GM18951 (cell line): ENCODE measurements at regions of chr1 and their contacts with region 1.

Region 1: DNA sequence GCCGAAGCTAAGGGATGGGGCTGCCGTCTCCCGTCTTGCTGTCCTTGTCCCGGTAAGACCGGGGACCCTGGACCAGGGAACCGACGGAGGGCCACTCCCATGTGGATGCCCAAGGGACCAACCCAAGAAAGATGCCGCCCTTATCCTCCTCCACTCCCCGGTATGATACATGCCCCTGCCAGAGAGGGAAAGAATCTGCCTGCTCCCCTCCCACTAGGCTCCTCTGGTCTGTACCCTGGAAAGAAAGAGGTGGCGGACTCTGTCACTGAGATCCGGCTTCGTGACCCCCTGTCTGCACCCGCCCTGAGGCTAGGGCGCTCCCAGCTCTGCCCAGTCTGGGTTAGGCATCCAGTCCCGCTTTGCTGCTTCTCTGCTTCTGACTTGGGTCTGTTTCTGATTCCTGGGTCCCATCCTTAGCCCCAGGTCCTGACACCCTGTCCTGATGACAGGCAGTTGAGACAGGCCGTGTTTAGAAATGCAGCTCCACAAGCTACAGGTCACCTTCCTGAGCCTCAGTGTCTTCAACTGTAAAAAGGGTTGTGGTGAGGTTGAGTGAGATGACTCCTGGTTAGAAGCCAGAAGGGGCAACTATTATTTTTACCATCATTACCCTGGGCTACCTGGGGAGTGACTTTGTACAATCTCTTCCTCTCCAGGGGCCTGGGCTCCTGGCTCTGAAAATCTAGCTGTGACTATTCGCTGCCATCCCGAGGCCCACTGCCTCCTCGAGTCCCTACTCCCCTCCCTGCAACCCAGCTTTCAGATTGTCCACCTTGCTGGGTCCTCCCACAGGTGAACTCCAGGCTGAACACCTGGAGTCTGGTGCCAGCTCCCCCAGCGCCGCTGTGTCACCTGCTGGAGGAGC is 3.7 kb downstream of the MATN1 start:
- POLR2A ChIP-seq: no peak

Region 2: GRCh38 chr1:30763651-30764248 is 44.1 kb after region 1 on chr1:
- in situ Hi-C with region 1: loop called (anchors 5 kb)
- POLR2A ChIP-seq: no peak